Mammary epithelial cell (primary cell): ENCODE measurements at regions of chr11 and their contacts with region 1.

Region 1: DNA sequence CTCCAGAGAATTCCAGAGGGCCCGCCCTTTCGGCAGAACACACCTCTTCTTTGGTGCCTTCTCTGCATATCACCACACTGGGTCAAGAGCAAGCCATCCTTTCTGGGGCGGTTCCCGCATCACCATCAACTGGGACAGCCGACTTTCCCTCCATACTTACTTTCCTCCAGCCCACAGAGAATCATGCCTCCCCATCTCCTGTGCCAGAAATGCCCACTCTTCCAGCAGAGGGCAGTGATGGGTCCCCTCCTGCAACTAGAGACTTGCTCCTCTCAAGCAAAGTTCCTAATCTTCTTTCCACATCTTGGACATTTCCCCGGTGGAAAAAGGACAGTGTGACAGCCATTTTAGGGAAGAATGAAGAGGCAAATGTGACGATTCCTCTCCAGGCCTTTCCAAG is 157.7 kb downstream of the C11orf91 start:
- DNase-seq: peak; percentile 47
- H3K4me3 ChIP-seq: no peak overlapping the region
- H3K27ac ChIP-seq: no peak overlapping the region
- H3K4me1 ChIP-seq: peaks cover 8% of the 10 kb centered on the region
- H3K27me3 ChIP-seq: no peaks in the 10 kb centered on the region
- CTCF ChIP-seq: peak; percentile 84 to 88

Region 2: GRCh38 chr11:33362051-33362910 is 180.6 kb before region 1 on chr11:
- CTCF ChIA-PET with region 1: no interaction called
- dilution Hi-C with region 1: no loop called
- in situ Hi-C with region 1: no loop called
- intact Hi-C with region 1: loop called (anchors 5 kb)
- DNase-seq: peak; percentile 42
- H3K4me3 ChIP-seq: no peak overlapping the region
- H3K27ac ChIP-seq: no peak overlapping the region
- H3K4me1 ChIP-seq: no peaks in the 10 kb centered on the region
- H3K27me3 ChIP-seq: no peaks in the 10 kb centered on the region
- CTCF ChIP-seq: peak; percentile 46 to 49

Region 3: GRCh38 chr11:33376331-33377310 is 166.3 kb before region 1 on chr11:
- CTCF ChIA-PET with region 1: no interaction called
- dilution Hi-C with region 1: no loop called
- in situ Hi-C with region 1: no loop called
- intact Hi-C with region 1: loop called (anchors 5 kb)
- DNase-seq: peak; percentile 33
- H3K4me3 ChIP-seq: peak overlapping the region; percentile 25 to 60 (median 54)
- H3K27ac ChIP-seq: no peak overlapping the region
- H3K4me1 ChIP-seq: peaks cover 13% of the 10 kb centered on the region
- H3K27me3 ChIP-seq: no peaks in the 10 kb centered on the region
- CTCF ChIP-seq: no peak

Region 4: DNA sequence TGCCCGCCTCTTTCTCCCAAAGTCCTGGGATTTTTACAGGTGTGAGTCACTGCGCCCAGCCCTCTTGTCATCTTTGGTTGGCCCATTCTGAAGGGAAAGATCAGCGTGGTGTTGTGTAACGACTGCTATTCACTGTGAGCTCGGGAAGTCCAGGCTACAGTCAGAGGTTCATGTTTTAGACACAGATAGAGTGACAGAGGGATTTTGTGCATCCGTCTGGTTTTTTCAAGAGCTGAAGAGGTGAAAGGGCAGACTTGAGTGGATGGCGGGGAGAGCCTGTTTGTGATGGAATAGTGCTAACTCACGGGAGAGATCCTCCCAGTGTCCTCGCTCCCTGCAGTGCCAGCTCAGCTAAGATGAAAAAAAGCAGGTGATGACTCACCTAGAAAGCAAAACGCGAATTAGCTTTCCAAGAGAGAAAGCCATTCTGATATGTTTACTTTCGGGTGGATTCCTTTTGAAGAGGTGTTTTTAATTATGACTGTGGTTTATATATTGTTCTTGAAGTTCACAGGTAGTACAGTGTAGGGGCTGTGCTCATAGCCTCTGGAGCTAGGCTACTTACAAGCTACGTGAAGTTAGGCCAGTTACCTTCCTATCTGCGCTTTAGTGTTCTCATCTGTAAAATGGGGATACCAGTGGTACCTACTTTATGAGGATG is 90.5 kb after region 1 on chr11:
- CTCF ChIA-PET with region 1: no interaction called
- dilution Hi-C with region 1: no loop called
- in situ Hi-C with region 1: no loop called
- intact Hi-C with region 1: loop called (anchors 5 kb)
- DNase-seq: peak; percentile 98
- H3K4me3 ChIP-seq: no peak overlapping the region
- H3K27ac ChIP-seq: peak overlapping the region; percentile 97
- H3K4me1 ChIP-seq: peaks cover 61% of the 10 kb centered on the region
- H3K27me3 ChIP-seq: no peaks in the 10 kb centered on the region
- CTCF ChIP-seq: no peak

Region 5: DNA sequence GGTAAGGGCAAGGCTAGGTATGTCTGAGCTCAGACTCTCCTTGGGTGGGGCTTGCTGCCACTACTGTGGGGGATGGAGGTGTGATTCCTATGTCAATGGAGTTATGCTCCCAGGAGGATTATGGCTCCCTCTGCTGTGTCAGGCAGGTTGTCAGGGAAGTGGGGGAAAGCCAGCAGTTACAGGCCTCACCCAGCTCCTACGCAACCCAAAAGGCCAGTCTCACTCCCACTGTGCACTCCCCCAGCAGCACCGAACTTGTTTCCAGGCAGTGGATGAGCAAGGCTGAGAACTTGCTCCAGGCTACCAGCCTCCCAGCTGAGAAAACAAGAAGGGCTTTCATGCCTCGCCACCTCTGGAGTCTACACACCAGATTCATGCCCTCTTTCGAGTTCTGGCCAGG is 139.5 kb after region 1 on chr11:
- CTCF ChIA-PET with region 1: no interaction called
- dilution Hi-C with region 1: no loop called
- in situ Hi-C with region 1: loop called (anchors 5 to 10 kb)
- intact Hi-C with region 1: loop called (anchors 1 kb)
- DNase-seq: peak; percentile 97
- H3K4me3 ChIP-seq: no peak overlapping the region
- H3K27ac ChIP-seq: peak overlapping the region; percentile 17
- H3K4me1 ChIP-seq: peaks cover 16% of the 10 kb centered on the region
- H3K27me3 ChIP-seq: no peaks in the 10 kb centered on the region
- CTCF ChIP-seq: peak; percentile 35 to 69

Region 6: DNA sequence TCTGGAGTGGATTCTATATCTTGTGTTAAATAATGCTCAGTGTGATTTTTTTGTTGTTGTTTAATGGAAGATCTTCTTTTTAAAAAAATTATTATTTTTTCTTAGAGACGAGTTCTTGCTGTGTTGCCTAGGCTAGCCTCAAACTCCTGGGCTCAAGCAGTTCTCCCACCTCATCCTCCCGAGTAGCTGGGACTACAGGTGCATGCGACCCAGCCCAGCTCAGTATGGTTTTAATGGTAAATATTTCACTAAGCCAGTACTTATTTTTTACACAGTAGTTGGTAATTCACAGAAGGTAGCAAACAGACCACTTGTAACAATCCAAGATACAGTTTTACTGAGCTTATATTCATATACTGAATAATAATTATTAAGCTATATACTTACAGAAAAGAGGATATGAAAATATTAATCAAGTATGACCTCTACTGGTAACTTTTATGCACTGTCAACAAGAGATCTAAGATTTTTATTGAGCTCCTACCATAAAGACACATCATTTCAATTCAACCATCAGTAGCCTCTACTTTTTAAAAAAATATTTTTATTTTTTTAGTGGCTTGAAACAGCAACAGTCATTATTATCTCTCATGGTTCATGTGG is 199.4 kb after region 1 on chr11:
- CTCF ChIA-PET with region 1: no interaction called
- dilution Hi-C with region 1: no loop called
- in situ Hi-C with region 1: no loop called
- intact Hi-C with region 1: loop called (anchors 2 kb)
- DNase-seq: no peak
- H3K4me3 ChIP-seq: no peak overlapping the region
- H3K27ac ChIP-seq: no peak overlapping the region
- H3K4me1 ChIP-seq: peaks cover 6% of the 10 kb centered on the region
- H3K27me3 ChIP-seq: no peaks in the 10 kb centered on the region
- CTCF ChIP-seq: peak; percentile 41 to 50

Region 7: GRCh38 chr11:33829433-33830141 is 286.7 kb after region 1 on chr11:
- CTCF ChIA-PET with region 1: no interaction called
- dilution Hi-C with region 1: no loop called
- in situ Hi-C with region 1: no loop called
- intact Hi-C with region 1: loop called (anchors 10 kb)
- DNase-seq: peak; percentile 66
- H3K4me3 ChIP-seq: peak overlapping the region; percentile 41 to 52 (median 52)
- H3K27ac ChIP-seq: no peak overlapping the region
- H3K4me1 ChIP-seq: peaks cover 26% of the 10 kb centered on the region
- H3K27me3 ChIP-seq: no peaks in the 10 kb centered on the region
- CTCF ChIP-seq: peak; percentile 93 to 95